ENCODE measurements at regions of chr11 and their contacts with region 1.

Region 1: GRCh38 chr11:119101759-119102423 is at the start of gene DPAGT1:
- DNase-seq: peak; percentile 89
- H3K4me3 Mint-ChIP-seq: peak within 1 kb of the TSS; percentile 92
- H3K27ac Mint-ChIP-seq: peak within 1 kb of the TSS; percentile 99
- H3K4me1 Mint-ChIP-seq: peaks cover 56% of the 10 kb centered on the region
- H3K27me3 Mint-ChIP-seq: no peaks in the 10 kb centered on the region
- total RNA-seq, gene DPAGT1: 57.3 to 58.4 TPM

Region 2: GRCh38 chr11:118997627-118998387 is 104.1 kb before region 1 on chr11 and contains the start of gene CENATAC:
- CTCF ChIA-PET with region 1: no interaction called
- POLR2A ChIA-PET with region 1: interaction called, 13 read pairs
- DNase-seq: peak; percentile 98
- H3K4me3 Mint-ChIP-seq: peak within 1 kb of the TSS; percentile 99
- H3K27ac Mint-ChIP-seq: peak within 1 kb of the TSS; percentile 95
- H3K4me1 Mint-ChIP-seq: peaks cover 36% of the 10 kb centered on the region
- H3K27me3 Mint-ChIP-seq: no peaks in the 10 kb centered on the region
- total RNA-seq, gene CENATAC: 34.6 to 35.0 TPM

Region 3: GRCh38 chr11:119057000-119057769 is 44.7 kb before region 1 on chr11 and contains the start of gene HYOU1:
- CTCF ChIA-PET with region 1: interaction called, 4 read pairs
- POLR2A ChIA-PET with region 1: interaction called, 22 read pairs
- DNase-seq: peak; percentile 99
- H3K4me3 Mint-ChIP-seq: peak within 1 kb of the TSS; percentile 95
- H3K27ac Mint-ChIP-seq: peak within 1 kb of the TSS; percentile 91
- H3K4me1 Mint-ChIP-seq: peaks cover 52% of the 10 kb centered on the region
- H3K27me3 Mint-ChIP-seq: no peaks in the 10 kb centered on the region
- total RNA-seq, gene HYOU1: 123 to 125 TPM

Region 4: GRCh38 chr11:119115484-119116234 is 13.8 kb after region 1 on chr11:
- CTCF ChIA-PET with region 1: interaction called, 7 read pairs
- POLR2A ChIA-PET with region 1: interaction called, 219 read pairs
- DNase-seq: no peak
- H3K4me3 Mint-ChIP-seq: peak overlapping the region; percentile 70
- H3K27ac Mint-ChIP-seq: peak overlapping the region; percentile 91
- H3K4me1 Mint-ChIP-seq: peaks cover 27% of the 10 kb centered on the region
- H3K27me3 Mint-ChIP-seq: no peaks in the 10 kb centered on the region

Region 5: DNA sequence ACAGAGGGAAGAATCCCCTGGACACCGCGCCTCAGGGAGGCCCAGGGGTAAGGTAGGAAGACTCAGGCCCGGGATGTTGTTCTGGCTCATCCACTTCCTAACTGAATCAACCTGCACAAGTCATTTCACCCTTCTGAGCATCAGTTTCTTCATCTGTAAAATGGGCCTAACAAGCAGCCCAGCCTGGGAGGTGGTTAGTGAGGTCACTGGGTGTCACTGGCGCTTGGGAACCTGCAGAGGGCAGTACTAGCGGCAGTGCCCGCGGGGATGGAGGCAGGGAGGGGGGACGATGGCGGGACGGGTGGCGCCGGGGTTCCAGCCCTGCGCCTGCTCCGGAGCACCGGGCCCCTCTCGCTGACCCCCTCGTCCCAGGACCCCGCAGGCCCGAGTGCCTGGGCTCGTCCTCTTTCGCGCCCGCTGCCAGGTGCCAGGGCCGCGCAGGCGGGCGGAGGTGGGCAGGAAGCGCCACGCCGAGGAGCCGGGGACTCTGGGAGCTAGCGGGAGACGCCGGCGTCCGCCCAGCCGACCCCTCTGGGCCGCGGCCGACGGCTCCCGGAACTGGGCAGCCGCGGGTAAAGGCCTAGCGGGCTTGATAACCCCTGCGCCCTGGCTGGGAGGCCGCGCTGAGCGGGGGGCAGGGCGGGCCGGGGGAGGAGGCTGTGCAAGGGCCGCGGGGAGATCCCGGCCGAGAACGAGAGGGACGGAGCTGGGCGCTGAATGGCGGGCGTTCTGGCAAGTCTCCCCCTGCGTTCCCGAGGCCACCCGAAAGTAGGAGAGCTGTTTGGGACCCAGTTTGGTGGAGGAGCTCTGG is 66.8 kb after region 1 on chr11 and contains the start of gene NLRX1:
- CTCF ChIA-PET with region 1: interaction called, 8 read pairs
- POLR2A ChIA-PET with region 1: interaction called, 10 read pairs
- DNase-seq: peak; percentile 89
- H3K4me3 Mint-ChIP-seq: peak within 1 kb of the TSS; percentile 89
- H3K27ac Mint-ChIP-seq: peak within 1 kb of the TSS; percentile 89
- H3K4me1 Mint-ChIP-seq: peaks cover 23% of the 10 kb centered on the region
- H3K27me3 Mint-ChIP-seq: no peaks in the 10 kb centered on the region
- total RNA-seq, gene NLRX1: 19.2 to 21.9 TPM

Region 6: GRCh38 chr11:119222308-119222707 is 120.4 kb after region 1 on chr11:
- CTCF ChIA-PET with region 1: no interaction called
- POLR2A ChIA-PET with region 1: no interaction called
- DNase-seq: no peak
- H3K4me3 Mint-ChIP-seq: no peak overlapping the region
- H3K27ac Mint-ChIP-seq: no peak overlapping the region
- H3K4me1 Mint-ChIP-seq: peaks cover 36% of the 10 kb centered on the region
- H3K27me3 Mint-ChIP-seq: no peaks in the 10 kb centered on the region